Mammary epithelial cell (primary cell): ENCODE measurements at regions of chr14 and their contacts with region 1.

Region 1: DNA sequence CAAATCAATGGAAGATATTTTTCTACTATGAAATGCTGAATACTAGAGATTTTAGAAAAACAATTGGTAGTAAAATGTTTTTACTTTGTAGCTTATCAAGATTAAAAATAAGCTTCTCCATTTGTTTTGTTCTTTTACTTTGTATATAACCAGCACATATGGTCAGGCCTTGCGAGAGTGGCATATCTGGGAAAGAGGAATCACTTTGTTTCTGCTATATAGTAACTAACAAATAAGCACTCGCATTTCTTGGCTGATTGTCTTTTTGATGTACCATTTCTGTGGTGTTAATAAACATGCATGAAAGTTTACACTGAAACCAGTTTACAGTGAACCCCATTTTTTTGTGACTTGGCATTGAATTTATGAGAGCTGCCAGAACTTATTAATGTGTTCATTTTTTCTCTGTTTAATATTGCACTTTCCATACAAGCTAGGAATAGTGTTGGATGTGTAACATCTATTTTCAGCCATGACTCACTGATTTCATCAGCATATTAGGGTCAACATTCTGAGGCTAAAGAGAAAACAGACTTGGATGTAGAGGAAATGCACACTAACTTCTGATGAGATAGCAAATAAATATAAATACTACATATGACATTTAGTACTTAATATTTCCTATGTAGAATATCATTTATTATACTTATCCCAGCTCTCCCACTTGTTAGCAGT is 635.5 kb downstream of the KCNH5 start:
- DNase-seq: peak; percentile 43
- H3K4me3 ChIP-seq: no peak overlapping the region
- H3K27ac ChIP-seq: no peak overlapping the region
- H3K4me1 ChIP-seq: no peaks in the 10 kb centered on the region
- H3K27me3 ChIP-seq: no peaks in the 10 kb centered on the region
- CTCF ChIP-seq: no peak

Region 2: GRCh38 chr14:62428429-62429203 is 18.9 kb after region 1 on chr14:
- CTCF ChIA-PET with region 1: no interaction called
- dilution Hi-C with region 1: no loop called
- in situ Hi-C with region 1: no loop called
- intact Hi-C with region 1: loop called (anchors 1 kb)
- DNase-seq: peak; percentile 70
- H3K4me3 ChIP-seq: no peak overlapping the region
- H3K27ac ChIP-seq: no peak overlapping the region
- H3K4me1 ChIP-seq: no peaks in the 10 kb centered on the region
- H3K27me3 ChIP-seq: no peaks in the 10 kb centered on the region
- CTCF ChIP-seq: no peak